ENCODE measurements at regions of chr1 and their contacts with region 1.

Region 1: DNA sequence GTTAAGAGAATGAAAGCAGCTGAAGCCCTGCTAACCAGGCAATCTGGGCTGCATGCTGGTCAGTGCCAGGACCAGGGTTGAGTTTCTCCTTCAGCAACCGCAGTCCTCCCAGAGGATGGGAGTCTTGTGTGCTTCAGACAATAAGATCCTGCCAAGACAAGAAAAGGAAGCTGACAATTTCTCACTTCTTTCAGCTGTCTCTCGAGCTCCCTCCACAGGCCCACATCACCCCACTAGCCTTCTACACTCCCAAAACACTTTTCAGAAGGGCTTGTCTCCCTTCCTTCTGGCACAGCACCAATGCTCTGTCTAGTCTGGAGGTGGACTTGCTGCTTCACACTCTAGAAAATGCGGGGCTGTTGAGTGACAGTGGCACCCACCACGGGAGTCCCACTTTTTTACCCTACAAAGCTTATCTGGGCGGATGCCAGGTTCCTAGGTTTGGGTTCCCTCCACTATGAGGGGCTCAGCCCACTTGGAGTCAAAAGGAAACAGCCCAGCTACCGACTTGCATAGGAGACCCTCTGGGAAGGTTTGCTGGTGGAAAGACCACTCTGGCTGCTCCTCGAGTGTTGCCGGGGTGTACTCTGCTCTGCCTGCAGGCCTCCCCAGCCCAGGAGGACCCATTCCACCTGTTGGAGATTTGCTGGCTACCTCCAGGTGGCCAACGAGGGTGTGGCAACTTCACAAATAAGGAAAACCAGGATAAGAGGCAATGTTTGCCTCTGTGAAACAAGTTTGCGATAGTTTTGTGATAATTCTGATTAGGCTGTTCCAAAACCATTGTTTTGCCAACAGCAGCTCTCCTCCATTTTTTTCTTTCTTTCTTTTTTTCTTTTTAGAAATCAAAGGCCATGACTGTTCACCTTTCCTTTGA is 68.9 kb downstream of the TENT5C start:
- DNase-seq: peak; percentile 64 to 72 (median 66)
- H3K4me3 ChIP-seq: no peak overlapping the region
- H3K4me3 Mint-ChIP-seq: no peak overlapping the region
- H3K27ac ChIP-seq: no peak overlapping the region
- H3K27ac Mint-ChIP-seq: peak overlapping the region in 6 of 7 donors; percentile 3 to 88 (median 74)
- H3K4me1 ChIP-seq: peaks cover 8% of the 10 kb centered on the region
- H3K4me1 Mint-ChIP-seq: peaks cover 5 to 9% (median 7%) of the 10 kb centered on the region in 4 donors
- H3K27me3 ChIP-seq: no peaks in the 10 kb centered on the region
- H3K27me3 Mint-ChIP-seq: peaks cover 0 to 2% of the 10 kb centered on the region in 2 donors

Region 2: DNA sequence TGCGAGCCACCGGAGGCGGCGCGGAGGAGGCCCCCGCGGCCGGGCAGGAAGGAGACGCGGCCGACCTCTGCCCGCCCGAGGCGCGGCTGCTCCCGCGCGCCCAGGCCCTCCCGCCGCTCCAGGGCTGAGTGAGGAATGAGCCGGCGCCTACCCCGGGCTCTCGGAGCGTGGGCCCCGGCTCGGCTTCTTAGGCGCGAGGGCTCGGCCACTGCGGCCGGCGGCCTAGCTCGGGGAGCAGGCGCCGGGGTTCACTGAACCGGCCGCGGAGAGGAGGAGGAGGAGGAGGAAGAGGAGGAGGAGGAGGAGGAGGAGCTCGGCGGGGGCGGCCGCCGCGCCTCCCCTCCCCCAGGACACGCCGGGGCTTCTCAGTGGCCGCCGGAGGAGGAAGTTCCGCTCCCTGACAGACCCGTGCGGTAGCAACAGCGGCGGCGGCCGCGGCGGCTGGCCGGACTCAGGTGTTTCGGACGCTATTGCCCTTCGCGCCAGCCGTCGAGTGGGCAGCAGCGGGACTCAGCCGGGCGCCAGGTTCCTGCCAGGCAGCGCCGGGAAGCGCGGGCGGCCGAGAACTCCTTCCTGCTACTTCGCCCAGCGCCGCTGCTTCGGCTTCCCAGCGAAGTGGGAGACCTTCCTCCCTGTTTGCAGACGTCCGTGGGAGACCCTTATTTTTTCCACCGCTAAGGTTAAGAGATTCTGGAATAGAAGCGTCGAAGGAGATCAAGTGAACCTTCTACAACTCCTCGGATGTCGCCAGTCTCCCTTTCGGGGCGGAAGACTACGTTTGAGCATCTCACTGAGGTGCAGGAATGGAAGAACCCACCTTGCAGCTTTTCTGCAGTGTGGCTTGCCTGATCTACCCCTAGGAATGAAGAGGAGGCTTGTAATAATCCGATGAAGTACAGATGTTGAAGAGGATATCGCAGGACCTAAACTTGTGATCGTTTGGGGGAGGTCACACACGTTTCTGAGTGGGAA is 307.4 kb before region 1 on chr1 and contains the start of gene MAN1A2:
- CTCF ChIA-PET with region 1: no interaction called
- POLR2A ChIA-PET with region 1: interaction called, 3 read pairs
- intact Hi-C with region 1: loop called (anchors 5 kb)
- DNase-seq: peak; percentile 66 to 84 (median 69)
- H3K4me3 ChIP-seq: peak within 1 kb of the TSS; percentile 72 to 92
- H3K4me3 Mint-ChIP-seq: peak within 1 kb of the TSS; percentile 93 to 97 (median 96)
- H3K27ac ChIP-seq: peak within 1 kb of the TSS; percentile 70
- H3K27ac Mint-ChIP-seq: peak within 1 kb of the TSS; percentile 96 to 99 (median 97)
- H3K4me1 ChIP-seq: peaks cover 74% of the 10 kb centered on the region
- H3K4me1 Mint-ChIP-seq: peaks cover 53 to 84% (median 63%) of the 10 kb centered on the region in 4 donors
- H3K27me3 ChIP-seq: no peaks in the 10 kb centered on the region
- H3K27me3 Mint-ChIP-seq: no peaks in the 10 kb centered on the region
- total RNA-seq, gene MAN1A2: 57.0 to 66.5 TPM

Region 3: GRCh38 chr1:117541003-117541402 is 133.8 kb before region 1 on chr1:
- CTCF ChIA-PET with region 1: interaction called, 278 read pairs
- POLR2A ChIA-PET with region 1: interaction called, 28 read pairs
- intact Hi-C with region 1: no loop called
- DNase-seq: no peak
- H3K4me3 ChIP-seq: no peak overlapping the region
- H3K4me3 Mint-ChIP-seq: no peak overlapping the region
- H3K27ac ChIP-seq: no peak overlapping the region
- H3K27ac Mint-ChIP-seq: no peak overlapping the region
- H3K4me1 ChIP-seq: peaks cover 11% of the 10 kb centered on the region
- H3K4me1 Mint-ChIP-seq: peaks cover 0 to 4% (median 0%) of the 10 kb centered on the region in 4 donors
- H3K27me3 ChIP-seq: no peaks in the 10 kb centered on the region
- H3K27me3 Mint-ChIP-seq: no peaks in the 10 kb centered on the region

Region 4: DNA sequence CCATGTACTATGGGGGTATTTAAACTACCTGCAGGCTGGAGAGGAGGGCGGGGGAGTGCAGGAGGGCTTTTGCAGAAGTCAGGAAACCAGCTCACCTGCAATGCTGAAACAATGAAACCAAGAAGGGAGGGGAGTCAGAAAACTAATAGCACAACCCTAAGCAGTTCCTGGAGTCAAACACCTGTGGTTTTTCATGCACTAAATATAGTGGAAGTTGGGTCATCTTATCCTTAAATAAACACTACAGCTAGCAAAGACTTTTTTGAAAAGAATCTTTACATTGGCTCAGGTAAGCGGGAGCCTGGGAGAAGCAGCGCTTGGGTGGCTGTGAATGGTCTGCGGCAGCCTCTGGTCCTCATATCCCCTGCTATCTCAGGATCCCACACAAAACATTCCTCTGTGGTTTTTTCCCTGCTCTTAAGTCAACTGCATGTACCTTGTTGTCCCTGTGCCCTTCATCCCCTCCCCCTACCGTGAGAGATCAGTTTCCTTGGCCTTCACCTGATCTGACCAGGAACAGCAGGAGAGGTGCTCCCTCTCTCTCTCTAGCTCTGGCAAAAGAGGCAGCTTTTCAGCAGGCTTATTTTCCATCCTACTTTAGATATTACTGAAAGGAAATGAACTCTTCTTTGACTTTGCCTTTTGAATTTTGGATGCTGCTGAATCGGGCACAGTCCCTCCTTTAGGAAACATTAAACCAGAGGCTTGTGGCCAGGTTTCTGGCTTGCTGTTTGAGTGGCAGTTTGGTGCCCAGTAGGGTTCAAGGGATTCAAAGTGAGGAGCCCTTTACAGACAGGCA is 42.3 kb before region 1 on chr1:
- CTCF ChIA-PET with region 1: interaction called, 20 read pairs
- POLR2A ChIA-PET with region 1: no interaction called
- intact Hi-C with region 1: loop called (anchors 5 kb)
- DNase-seq: no peak
- H3K4me3 ChIP-seq: no peak overlapping the region
- H3K4me3 Mint-ChIP-seq: peak overlapping the region in 2 of 8 donors; percentile 10 to 49
- H3K27ac ChIP-seq: no peak overlapping the region
- H3K27ac Mint-ChIP-seq: peak overlapping the region in 2 of 7 donors; percentile 7 to 76
- H3K4me1 ChIP-seq: peaks cover 40% of the 10 kb centered on the region
- H3K4me1 Mint-ChIP-seq: peaks cover 21 to 69% (median 47%) of the 10 kb centered on the region in 4 donors
- H3K27me3 ChIP-seq: no peaks in the 10 kb centered on the region
- H3K27me3 Mint-ChIP-seq: no peaks in the 10 kb centered on the region

Region 5: DNA sequence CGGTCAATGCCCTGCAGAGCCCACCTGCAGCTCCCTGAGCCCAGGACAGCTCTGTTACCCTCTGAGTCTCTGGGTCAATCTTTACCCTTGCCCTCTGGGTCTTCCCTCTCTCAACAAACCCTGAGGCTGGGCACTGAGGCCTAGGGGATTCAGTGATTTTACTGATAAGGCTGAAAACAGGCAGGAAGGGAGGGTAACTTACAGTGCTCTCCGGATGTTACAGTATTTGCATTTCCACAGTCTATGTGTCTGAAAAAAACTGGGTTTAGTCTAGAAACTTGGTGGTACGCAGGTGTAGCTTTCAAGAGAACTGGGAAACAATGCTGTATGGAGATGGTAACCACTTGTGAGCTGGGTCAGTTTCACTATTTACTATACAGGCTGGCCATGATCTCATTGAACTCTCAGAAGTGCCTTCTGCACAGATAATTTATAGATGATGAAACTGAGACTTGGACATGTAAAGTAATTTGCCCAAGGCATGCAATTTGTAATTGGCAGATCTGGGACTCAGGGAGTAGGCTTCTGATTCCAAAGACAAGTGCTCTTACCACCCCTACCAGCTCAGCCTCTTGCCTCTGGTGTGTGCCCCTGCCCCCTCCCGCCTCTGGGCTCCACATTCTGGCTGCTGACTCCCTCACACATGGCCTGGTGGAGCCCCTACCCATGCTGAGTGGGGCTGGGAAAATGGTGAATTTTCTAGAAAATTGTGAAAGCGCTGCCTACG is 20.1 kb before region 1 on chr1:
- CTCF ChIA-PET with region 1: interaction called, 48 read pairs
- POLR2A ChIA-PET with region 1: interaction called, 26 read pairs
- intact Hi-C with region 1: loop called (anchors 1 kb)
- DNase-seq: peak in 4 of 5 donors; percentile 31 to 44 (median 37)
- H3K4me3 ChIP-seq: peak overlapping the region; percentile 8 to 20
- H3K4me3 Mint-ChIP-seq: peak overlapping the region; percentile 52 to 88 (median 76)
- H3K27ac ChIP-seq: peak overlapping the region; percentile 9
- H3K27ac Mint-ChIP-seq: peak overlapping the region; percentile 81 to 99 (median 94)
- H3K4me1 ChIP-seq: peaks cover 95% of the 10 kb centered on the region
- H3K4me1 Mint-ChIP-seq: peaks cover 75 to 92% (median 86%) of the 10 kb centered on the region in 4 donors
- H3K27me3 ChIP-seq: no peaks in the 10 kb centered on the region
- H3K27me3 Mint-ChIP-seq: no peaks in the 10 kb centered on the region

Region 6: GRCh38 chr1:117719004-117719403 is 44.2 kb after region 1 on chr1:
- CTCF ChIA-PET with region 1: no interaction called
- POLR2A ChIA-PET with region 1: no interaction called
- intact Hi-C with region 1: no loop called
- DNase-seq: peak; percentile 44 to 72 (median 55)
- H3K4me3 ChIP-seq: no peak overlapping the region
- H3K4me3 Mint-ChIP-seq: peak overlapping the region in 5 of 8 donors; percentile 8 to 60 (median 23)
- H3K27ac ChIP-seq: no peak overlapping the region
- H3K27ac Mint-ChIP-seq: peak overlapping the region in 6 of 7 donors; percentile 15 to 61 (median 30)
- H3K4me1 ChIP-seq: peaks cover 12% of the 10 kb centered on the region
- H3K4me1 Mint-ChIP-seq: peaks cover 10 to 16% (median 12%) of the 10 kb centered on the region in 4 donors
- H3K27me3 ChIP-seq: no peaks in the 10 kb centered on the region
- H3K27me3 Mint-ChIP-seq: peaks cover 2 to 10% of the 10 kb centered on the region in 2 donors

Measured in CD4-positive, alpha-beta memory T cell (primary cell).